ENCODE measurements at regions of chr2 and their contacts with region 1.

Region 1: GRCh38 chr2:197255543-197255942 is 55.0 kb downstream of the ANKRD44 start:
- DNase-seq: peak; percentile 88
- H3K4me3 Mint-ChIP-seq: peak overlapping the region; percentile 85
- H3K27ac Mint-ChIP-seq: peak overlapping the region; percentile 100
- H3K4me1 Mint-ChIP-seq: peaks cover 82% of the 10 kb centered on the region
- H3K27me3 Mint-ChIP-seq: no peaks in the 10 kb centered on the region

Region 2: DNA sequence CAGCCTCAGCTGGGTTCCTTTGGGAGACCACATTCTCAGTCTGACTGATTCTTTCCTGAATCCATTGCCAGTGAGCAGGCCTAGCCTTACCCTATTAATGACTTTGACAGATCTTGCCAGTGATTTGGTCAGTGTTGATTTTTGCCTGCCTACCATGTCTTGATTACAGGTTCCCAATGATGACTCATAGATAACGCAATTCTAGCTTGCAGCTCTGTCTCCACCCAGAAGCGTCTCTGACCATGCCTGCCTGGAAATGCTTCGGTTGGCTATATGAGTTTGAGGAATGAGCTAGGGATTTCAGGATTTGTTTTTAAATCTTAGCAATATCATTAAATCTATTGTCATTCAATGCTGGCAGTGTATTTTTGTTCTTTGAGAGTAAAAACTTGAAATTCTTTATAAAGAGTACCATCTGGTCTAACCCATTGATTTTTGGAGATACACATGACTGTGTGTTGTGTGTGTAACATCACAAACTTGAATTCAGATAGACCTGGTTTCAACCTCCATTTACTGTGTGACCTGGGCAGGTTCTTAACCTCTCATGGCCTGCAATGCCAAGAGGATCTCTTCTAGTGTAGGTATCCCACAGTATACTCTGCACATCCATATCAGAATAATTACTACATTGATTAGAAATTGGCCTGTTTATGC is 559.0 kb before region 1 on chr2:
- CTCF ChIA-PET with region 1: no interaction called
- POLR2A ChIA-PET with region 1: no interaction called
- intact Hi-C with region 1: no loop called
- DNase-seq: no peak
- H3K4me3 Mint-ChIP-seq: no peak overlapping the region
- H3K27ac Mint-ChIP-seq: no peak overlapping the region
- H3K4me1 Mint-ChIP-seq: no peaks in the 10 kb centered on the region
- H3K27me3 Mint-ChIP-seq: peaks cover 2% of the 10 kb centered on the region

Region 3: DNA sequence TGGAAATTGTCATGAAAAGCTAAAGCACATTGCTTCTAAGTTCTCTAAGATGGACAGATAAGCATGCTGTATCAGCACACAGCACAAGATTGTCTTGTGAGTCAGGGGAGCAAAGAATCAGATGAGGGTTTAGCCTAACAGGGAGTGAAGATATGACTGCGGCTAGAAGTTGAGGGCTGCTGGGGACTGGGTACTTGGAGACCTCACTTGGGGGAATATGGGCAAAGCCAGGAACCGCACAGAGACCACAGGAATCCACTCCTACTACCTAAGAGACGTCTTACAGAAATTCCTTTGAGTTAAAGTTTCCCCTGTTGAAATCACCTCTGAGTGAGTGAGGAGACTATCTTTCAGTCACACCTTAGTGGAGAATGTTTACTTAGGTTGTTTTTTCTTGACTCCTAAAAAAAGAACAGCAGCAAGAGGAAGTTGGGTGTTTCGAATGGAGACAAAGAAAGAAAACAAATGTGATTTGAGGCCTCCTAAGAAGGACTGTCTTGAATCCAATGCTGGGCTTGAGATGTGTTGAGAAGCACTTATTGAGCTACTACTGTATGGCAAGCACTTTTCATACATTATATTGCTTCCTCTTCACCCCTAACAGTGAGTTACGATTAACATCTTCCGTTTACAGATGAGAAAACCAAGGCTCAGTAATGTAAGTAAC is 45.7 kb before region 1 on chr2:
- CTCF ChIA-PET with region 1: interaction called, 4 read pairs
- POLR2A ChIA-PET with region 1: interaction called, 4 read pairs
- intact Hi-C with region 1: loop called (anchors 1 kb)
- DNase-seq: peak; percentile 86
- H3K4me3 Mint-ChIP-seq: peak overlapping the region; percentile 58
- H3K27ac Mint-ChIP-seq: peak overlapping the region; percentile 94
- H3K4me1 Mint-ChIP-seq: peaks cover 98% of the 10 kb centered on the region
- H3K27me3 Mint-ChIP-seq: no peaks in the 10 kb centered on the region

Region 4: GRCh38 chr2:197239434-197239833 is 16.1 kb before region 1 on chr2:
- CTCF ChIA-PET with region 1: interaction called, 6 read pairs
- POLR2A ChIA-PET with region 1: interaction called, 7 read pairs
- intact Hi-C with region 1: loop called (anchors 1 kb)
- DNase-seq: no peak
- H3K4me3 Mint-ChIP-seq: peak overlapping the region; percentile 78
- H3K27ac Mint-ChIP-seq: peak overlapping the region; percentile 92
- H3K4me1 Mint-ChIP-seq: peaks cover 83% of the 10 kb centered on the region
- H3K27me3 Mint-ChIP-seq: no peaks in the 10 kb centered on the region

Region 5: GRCh38 chr2:197293252-197294007 is 37.9 kb after region 1 on chr2:
- CTCF ChIA-PET with region 1: interaction called, 4 read pairs
- POLR2A ChIA-PET with region 1: interaction called, 10 read pairs
- intact Hi-C with region 1: loop called (anchors 2 kb)
- DNase-seq: peak; percentile 41
- H3K4me3 Mint-ChIP-seq: peak overlapping the region; percentile 74
- H3K27ac Mint-ChIP-seq: peak overlapping the region; percentile 100
- H3K4me1 Mint-ChIP-seq: peaks cover 89% of the 10 kb centered on the region
- H3K27me3 Mint-ChIP-seq: no peaks in the 10 kb centered on the region

Region 6: DNA sequence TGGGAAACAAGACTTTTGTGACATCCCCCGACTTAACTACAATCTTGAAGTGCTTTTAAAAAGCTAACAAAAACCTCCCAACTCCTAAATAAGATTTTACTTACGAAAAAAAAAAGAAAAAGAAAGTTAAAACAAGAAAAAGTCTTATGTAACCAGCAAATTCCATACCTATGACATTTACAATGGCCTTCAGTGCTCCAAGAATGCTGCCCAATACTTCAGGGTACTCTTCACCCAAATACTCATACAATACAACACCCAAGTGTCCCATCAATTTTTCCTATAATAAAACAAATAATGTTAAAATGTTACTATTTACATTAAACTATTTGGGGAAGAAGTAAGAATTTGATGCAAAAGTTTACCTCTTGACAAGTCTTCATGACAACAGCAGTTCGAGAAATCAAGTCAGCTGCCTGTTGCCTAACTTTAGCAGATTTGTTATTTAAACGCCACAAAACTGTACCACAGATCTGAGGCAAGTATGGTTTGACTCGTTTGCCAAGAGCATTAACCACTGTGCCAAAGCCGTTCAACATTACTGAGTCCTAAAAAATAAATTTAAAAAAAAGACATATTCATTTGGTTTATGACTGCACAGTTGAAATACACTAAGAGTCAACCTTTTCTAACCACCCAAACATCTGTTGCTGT is 144.5 kb after region 1 on chr2:
- CTCF ChIA-PET with region 1: no interaction called
- POLR2A ChIA-PET with region 1: no interaction called
- intact Hi-C with region 1: no loop called
- DNase-seq: no peak
- H3K4me3 Mint-ChIP-seq: no peak overlapping the region
- H3K27ac Mint-ChIP-seq: no peak overlapping the region
- H3K4me1 Mint-ChIP-seq: no peaks in the 10 kb centered on the region
- H3K27me3 Mint-ChIP-seq: no peaks in the 10 kb centered on the region

Region 7: DNA sequence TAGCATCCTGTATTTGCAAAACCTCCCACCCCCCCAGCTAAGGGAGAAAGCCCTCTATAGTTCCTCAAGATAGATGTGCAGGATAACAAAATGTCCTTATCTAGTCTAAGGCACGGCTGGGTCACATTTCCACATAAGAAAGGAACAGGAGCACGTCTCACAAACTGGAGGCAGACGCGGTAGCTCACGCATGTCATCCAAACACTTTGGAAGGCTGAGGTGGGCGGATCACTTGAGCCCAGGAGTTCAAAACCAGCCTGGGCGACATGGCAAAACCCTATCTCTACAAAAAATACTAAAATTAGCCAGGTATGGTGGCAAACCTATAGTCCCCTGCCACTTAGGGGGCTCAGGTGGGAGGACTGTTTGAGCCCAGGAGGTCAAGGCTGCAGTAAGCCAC is 170.0 kb after region 1 on chr2:
- CTCF ChIA-PET with region 1: no interaction called
- POLR2A ChIA-PET with region 1: no interaction called
- intact Hi-C with region 1: no loop called
- DNase-seq: no peak
- H3K4me3 Mint-ChIP-seq: no peak overlapping the region
- H3K27ac Mint-ChIP-seq: peak overlapping the region; percentile 50
- H3K4me1 Mint-ChIP-seq: peaks cover 71% of the 10 kb centered on the region
- H3K27me3 Mint-ChIP-seq: no peaks in the 10 kb centered on the region